ENCODE measurements at regions of chr7 and their contacts with region 1.

Region 1: DNA sequence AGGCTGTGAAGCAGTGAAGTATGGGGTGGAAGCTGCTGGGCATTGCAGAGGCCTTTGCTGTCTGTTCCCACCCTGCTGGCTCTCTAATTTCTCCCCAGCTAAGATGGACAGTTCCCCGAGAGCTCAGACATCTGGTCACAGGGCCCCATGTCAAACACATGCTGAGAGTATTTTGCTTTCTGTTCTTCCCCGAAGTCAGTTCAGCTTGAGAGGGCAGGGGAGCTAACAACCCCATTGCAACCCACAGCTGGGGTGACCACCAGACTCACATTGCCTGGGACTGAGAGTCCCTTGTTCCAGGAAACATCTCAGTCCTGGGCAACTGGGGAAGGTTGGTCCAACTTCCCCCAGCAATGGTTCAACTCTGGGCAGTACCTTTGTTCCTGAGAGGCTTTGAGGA is 52.8 kb downstream of the ABCA13 start:
- DNase-seq: no peak
- H3K4me3 ChIP-seq: no peak overlapping the region
- H3K27ac ChIP-seq: no peak overlapping the region
- H3K4me1 ChIP-seq: no peaks in the 10 kb centered on the region
- H3K27me3 ChIP-seq: no peaks in the 10 kb centered on the region
- CTCF ChIP-seq: no peak
- POLR2A ChIP-seq: no peak

Region 2: DNA sequence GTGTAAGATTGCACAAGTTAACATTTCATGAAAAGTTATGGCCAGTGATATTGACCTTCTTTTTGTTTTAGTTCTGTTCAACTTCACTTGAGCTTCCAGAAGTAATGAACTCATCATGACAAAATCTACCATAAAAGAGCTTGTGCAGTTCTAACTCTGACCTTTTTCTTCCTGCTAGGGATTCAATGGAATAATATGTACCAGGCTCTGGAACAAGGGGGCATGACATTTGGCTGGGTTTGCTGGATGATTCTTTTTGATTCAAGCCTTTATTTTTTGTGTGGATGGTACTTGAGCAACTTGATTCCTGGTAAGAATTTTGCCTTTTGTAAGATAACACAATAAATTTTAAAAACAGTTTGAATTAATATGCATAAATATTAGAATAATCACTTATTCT is 152.2 kb after region 1 on chr7:
- CTCF ChIA-PET with region 1: no interaction called
- POLR2A ChIA-PET with region 1: no interaction called
- dilution Hi-C with region 1: no loop called
- intact Hi-C with region 1: loop called (anchors 10 kb)
- DNase-seq: no peak
- H3K4me3 ChIP-seq: no peak overlapping the region
- H3K27ac ChIP-seq: no peak overlapping the region
- H3K4me1 ChIP-seq: no peaks in the 10 kb centered on the region
- H3K27me3 ChIP-seq: no peaks in the 10 kb centered on the region
- CTCF ChIP-seq: no peak
- POLR2A ChIP-seq: no peak

Region 3: DNA sequence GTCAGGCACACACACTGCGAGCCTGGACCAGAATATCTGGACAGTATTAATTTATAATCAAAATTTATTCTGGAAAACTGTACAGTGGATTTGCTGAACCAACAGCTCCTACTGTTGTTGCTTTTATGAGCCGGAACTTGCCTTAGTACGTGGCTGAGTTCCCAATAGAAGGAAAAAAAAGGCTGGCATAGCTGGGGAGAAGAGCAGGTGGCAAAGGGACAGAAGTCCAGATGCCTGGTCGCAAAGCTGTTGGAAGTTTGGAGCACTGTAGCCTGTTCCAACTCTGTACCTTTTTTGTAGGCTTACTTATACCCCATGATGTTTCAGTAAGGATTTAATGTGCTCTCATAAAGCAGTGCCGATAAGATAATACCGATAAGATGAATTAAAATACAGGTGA is 281.0 kb after region 1 on chr7:
- CTCF ChIA-PET with region 1: no interaction called
- POLR2A ChIA-PET with region 1: no interaction called
- dilution Hi-C with region 1: no loop called
- intact Hi-C with region 1: no loop called
- DNase-seq: no peak
- H3K4me3 ChIP-seq: no peak overlapping the region
- H3K27ac ChIP-seq: no peak overlapping the region
- H3K4me1 ChIP-seq: no peaks in the 10 kb centered on the region
- H3K27me3 ChIP-seq: no peaks in the 10 kb centered on the region
- CTCF ChIP-seq: no peak
- POLR2A ChIP-seq: no peak

Measured in endothelial cell of umbilical vein (primary cell).